A549 (cell line): ENCODE measurements at regions of chr20 and their contacts with region 1.

Region 1: GRCh38 chr20:52104546-52105441 is 86.8 kb downstream of the ZFP64 start:
- DNase-seq: peak; percentile 55 to 68
- ATAC-seq: peak; percentile 67 to 83
- H3K4me3 ChIP-seq: peak overlapping the region; percentile 53
- H3K27ac ChIP-seq: peak overlapping the region; percentile 75 to 91
- H3K4me1 ChIP-seq: peaks cover 8% of the 10 kb centered on the region; the same call in 1 of the 3 replicates
- CTCF ChIP-seq: no peak
- EP300 ChIP-seq: no peak
- POLR2A ChIP-seq: no peak
- RAD21 ChIP-seq: no peak

Region 2: DNA sequence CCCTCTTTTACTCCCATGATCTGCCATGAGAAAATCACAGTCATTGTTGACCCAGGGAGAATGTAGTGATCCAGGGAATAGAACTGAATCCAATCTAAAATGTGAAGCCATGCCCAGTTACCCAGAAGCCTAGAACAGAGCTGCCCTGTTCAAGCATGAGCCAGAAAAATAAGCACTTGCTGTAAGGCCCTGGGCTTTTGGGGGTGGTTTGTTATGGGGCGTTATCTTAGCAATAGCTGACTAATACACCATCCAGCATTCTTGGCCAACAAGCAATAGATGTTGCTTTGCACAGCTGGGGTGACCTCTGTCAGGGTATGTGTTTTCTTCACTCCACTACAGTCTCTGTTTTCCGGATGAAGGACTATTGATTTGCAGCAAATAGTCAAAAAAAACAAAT is 33.7 kb before region 1 on chr20:
- CTCF ChIA-PET with region 1: no interaction called
- POLR2A ChIA-PET with region 1: no interaction called
- DNase-seq: no peak
- ATAC-seq: no peak
- H3K4me3 ChIP-seq: no peak overlapping the region
- H3K27ac ChIP-seq: no peak overlapping the region
- H3K4me1 ChIP-seq: no peaks in the 10 kb centered on the region
- CTCF ChIP-seq: no peak
- EP300 ChIP-seq: no peak
- POLR2A ChIP-seq: no peak
- RAD21 ChIP-seq: no peak

Region 3: GRCh38 chr20:52118016-52118623 is 13.3 kb after region 1 on chr20:
- CTCF ChIA-PET with region 1: interaction called, 17 read pairs
- POLR2A ChIA-PET with region 1: no interaction called
- DNase-seq: no peak
- ATAC-seq: no peak
- H3K4me3 ChIP-seq: no peak overlapping the region
- H3K27ac ChIP-seq: no peak overlapping the region
- H3K4me1 ChIP-seq: no peaks in the 10 kb centered on the region
- CTCF ChIP-seq: no peak
- EP300 ChIP-seq: no peak
- POLR2A ChIP-seq: no peak
- RAD21 ChIP-seq: no peak